ENCODE measurements at regions of chr20 and their contacts with region 1.

Region 1: GRCh38 chr20:44584162-44584561 is 1.8 kb downstream of the PKIG start:
- DNase-seq: no peak
- ATAC-seq: no peak
- H3K4me3 ChIP-seq: peak overlapping the region; percentile 36
- H3K4me3 Mint-ChIP-seq: no peak overlapping the region
- H3K27ac ChIP-seq: peak overlapping the region; percentile 71
- H3K27ac Mint-ChIP-seq: no peak overlapping the region
- H3K4me1 ChIP-seq: peaks cover 20% of the 10 kb centered on the region
- H3K4me1 Mint-ChIP-seq: peaks cover 32 to 35% of the 10 kb centered on the region in 2 donors
- H3K27me3 ChIP-seq: no peaks in the 10 kb centered on the region
- H3K27me3 Mint-ChIP-seq: no peaks in the 10 kb centered on the region
- CTCF ChIP-seq: no peak

Region 2: GRCh38 chr20:44642203-44643153 is 58.3 kb after region 1 on chr20:
- intact Hi-C with region 1: loop called (anchors 2 kb)
- DNase-seq: peak; percentile 57 to 67
- ATAC-seq: peak; percentile 49 to 69 (median 66)
- H3K4me3 ChIP-seq: peak overlapping the region; percentile 5
- H3K4me3 Mint-ChIP-seq: peak overlapping the region; percentile 83
- H3K27ac ChIP-seq: peak overlapping the region; percentile 96
- H3K27ac Mint-ChIP-seq: peak overlapping the region; percentile 89 to 92
- H3K4me1 ChIP-seq: peaks cover 81% of the 10 kb centered on the region
- H3K4me1 Mint-ChIP-seq: peaks cover 77 to 86% of the 10 kb centered on the region in 2 donors
- H3K27me3 ChIP-seq: no peaks in the 10 kb centered on the region
- H3K27me3 Mint-ChIP-seq: no peaks in the 10 kb centered on the region
- CTCF ChIP-seq: no peak